Activated CD8-positive, alpha-beta T cell treated with anti-CD3 and anti-CD28 coated beads for 36 hours (primary cell): ENCODE measurements at regions of chr1 and their contacts with region 1.

Region 1: DNA sequence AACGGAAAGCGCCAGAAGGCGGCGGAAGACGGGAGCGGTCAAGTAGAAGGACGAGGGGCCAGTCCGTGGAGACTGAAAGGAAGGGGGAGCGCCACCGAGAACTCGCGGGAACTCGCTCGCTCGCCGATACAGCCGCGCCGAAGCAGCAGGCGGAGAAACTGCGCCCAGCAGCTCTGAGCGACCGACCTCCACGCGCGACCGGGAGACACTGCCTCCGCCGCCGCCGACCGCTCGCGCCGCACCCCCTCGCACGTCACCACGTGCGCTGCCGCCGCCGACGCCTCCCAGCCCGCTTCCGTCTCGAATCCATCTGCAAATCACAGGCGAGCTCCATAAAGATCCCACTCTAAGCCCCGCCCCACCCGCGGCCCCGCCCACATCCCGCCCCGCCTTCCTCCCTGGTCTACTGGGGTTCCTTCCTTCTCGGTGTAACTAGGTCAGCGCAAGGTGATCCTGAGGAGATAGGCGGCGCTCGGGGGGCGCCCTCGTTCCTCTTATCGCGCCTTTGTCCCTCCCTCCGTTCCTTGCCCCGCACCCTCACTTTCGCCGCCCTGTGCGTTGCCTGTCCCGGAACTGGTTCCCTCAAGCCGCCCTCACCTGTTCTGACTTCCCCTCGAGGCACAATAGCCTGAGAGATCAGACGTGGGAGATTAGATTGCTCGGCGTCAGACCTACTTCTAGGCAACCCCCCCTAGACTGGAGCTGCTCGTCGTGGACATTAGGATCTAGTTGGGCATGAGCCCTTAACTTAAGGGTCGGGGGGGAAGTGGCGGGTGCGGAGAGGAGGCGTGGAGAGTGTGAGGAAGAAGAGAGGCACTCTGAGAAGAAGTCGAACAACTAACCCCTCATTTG is at the start of gene IVNS1ABP:
- DNase-seq: peak; percentile 97
- ATAC-seq: peak; percentile 81
- H3K4me3 Mint-ChIP-seq: peak within 1 kb of the TSS; percentile 97
- H3K27ac Mint-ChIP-seq: peak within 1 kb of the TSS; percentile 95
- H3K4me1 Mint-ChIP-seq: peaks cover 43% of the 10 kb centered on the region
- H3K27me3 Mint-ChIP-seq: no peaks in the 10 kb centered on the region
- CTCF ChIP-seq: peak; percentile 6
- total RNA-seq, gene IVNS1ABP: 244 to 256 TPM

Region 2: GRCh38 chr1:185305419-185305818 is 11.8 kb before region 1 on chr1:
- CTCF ChIA-PET with region 1: interaction called, 3 read pairs
- POLR2A ChIA-PET with region 1: interaction called, 28 read pairs
- intact Hi-C with region 1: no loop called
- DNase-seq: no peak
- ATAC-seq: no peak
- H3K4me3 Mint-ChIP-seq: no peak overlapping the region
- H3K27ac Mint-ChIP-seq: no peak overlapping the region
- H3K4me1 Mint-ChIP-seq: peaks cover 11% of the 10 kb centered on the region
- H3K27me3 Mint-ChIP-seq: no peaks in the 10 kb centered on the region
- CTCF ChIP-seq: no peak

Region 3: DNA sequence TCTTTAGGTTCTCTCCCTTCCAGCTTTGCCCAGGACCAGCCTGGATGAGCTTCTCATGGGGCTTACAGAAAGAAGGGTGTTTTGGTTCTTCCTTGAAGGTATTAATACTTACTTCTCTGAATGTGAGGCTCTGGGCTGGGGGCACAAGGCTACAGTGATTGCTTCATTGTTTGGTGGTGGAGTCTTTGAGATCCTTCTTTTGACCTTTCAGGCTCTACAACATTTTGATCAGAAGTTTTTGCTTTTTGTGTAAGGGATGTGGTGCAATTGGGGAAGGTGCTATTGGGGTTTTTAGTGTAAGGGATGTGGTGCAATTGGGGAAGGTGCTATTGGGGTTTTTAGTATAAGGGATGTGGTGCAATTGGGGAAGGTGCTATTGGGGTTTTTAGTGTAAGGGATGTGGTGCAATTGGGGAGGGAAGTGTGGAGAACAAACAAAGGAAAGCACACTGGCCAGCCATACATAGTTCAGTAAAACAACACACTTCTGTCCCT is 103.4 kb after region 1 on chr1:
- CTCF ChIA-PET with region 1: interaction called, 6 read pairs
- POLR2A ChIA-PET with region 1: interaction called, 16 read pairs
- intact Hi-C with region 1: no loop called
- DNase-seq: peak; percentile 45
- ATAC-seq: peak; percentile 73
- H3K4me3 Mint-ChIP-seq: peak overlapping the region; percentile 27
- H3K27ac Mint-ChIP-seq: peak overlapping the region; percentile 83
- H3K4me1 Mint-ChIP-seq: peaks cover 30% of the 10 kb centered on the region
- H3K27me3 Mint-ChIP-seq: no peaks in the 10 kb centered on the region
- CTCF ChIP-seq: no peak

Region 4: GRCh38 chr1:185559684-185560331 is 242.5 kb after region 1 on chr1:
- CTCF ChIA-PET with region 1: interaction called, 18 read pairs
- POLR2A ChIA-PET with region 1: interaction called, 22 read pairs
- intact Hi-C with region 1: no loop called
- DNase-seq: peak; percentile 81
- ATAC-seq: peak; percentile 94
- H3K4me3 Mint-ChIP-seq: no peak overlapping the region
- H3K27ac Mint-ChIP-seq: peak overlapping the region; percentile 83
- H3K4me1 Mint-ChIP-seq: peaks cover 36% of the 10 kb centered on the region
- H3K27me3 Mint-ChIP-seq: no peaks in the 10 kb centered on the region
- CTCF ChIP-seq: peak; percentile 39

Region 5: DNA sequence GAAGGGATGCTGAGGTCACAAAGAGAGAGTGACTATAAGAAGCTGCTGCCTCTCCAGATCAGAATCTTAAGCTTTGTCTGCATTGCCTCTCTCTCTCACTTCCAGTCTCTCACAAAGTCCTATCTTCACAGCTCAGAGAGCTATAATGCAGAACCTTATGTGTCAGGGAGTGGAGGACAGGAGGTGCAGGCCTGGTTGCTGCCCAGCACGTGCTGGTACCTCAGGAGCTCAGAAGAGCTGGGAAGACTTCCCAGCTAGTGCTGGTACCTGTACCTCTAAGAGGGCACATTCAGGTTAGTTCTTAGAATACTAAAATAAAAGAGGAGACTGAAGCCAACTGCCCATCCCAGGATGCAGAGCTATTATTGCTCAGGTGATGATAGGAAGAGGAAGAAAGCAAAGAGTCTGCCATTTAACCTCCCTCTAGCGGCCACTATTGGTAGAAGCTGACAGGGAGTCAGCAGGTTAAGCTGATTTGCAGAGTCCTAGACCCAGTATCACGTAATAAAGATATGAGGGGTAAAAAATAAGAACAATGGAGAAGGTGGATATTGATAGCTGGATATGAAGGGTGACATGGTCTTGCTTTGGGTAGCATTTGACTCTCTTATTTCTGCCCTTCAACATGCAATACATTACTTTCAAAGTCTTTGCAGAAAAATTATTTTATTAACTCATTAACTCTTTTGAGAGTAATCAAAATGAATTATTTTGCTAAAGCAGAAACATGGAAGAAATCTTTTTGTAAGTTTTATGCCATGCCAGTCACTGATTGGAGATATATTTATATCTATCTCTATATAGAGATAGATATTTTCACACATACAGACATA is 278.8 kb after region 1 on chr1:
- CTCF ChIA-PET with region 1: interaction called, 10 read pairs
- POLR2A ChIA-PET with region 1: interaction called, 11 read pairs
- intact Hi-C with region 1: no loop called
- DNase-seq: peak; percentile 64
- ATAC-seq: peak; percentile 82
- H3K4me3 Mint-ChIP-seq: no peak overlapping the region
- H3K27ac Mint-ChIP-seq: no peak overlapping the region
- H3K4me1 Mint-ChIP-seq: peaks cover 14% of the 10 kb centered on the region
- H3K27me3 Mint-ChIP-seq: no peaks in the 10 kb centered on the region
- CTCF ChIP-seq: peak; percentile 54

Region 6: GRCh38 chr1:185681034-185681633 is 363.9 kb after region 1 on chr1:
- CTCF ChIA-PET with region 1: interaction called, 11 read pairs
- POLR2A ChIA-PET with region 1: interaction called, 4 read pairs
- intact Hi-C with region 1: no loop called
- DNase-seq: peak; percentile 22
- ATAC-seq: peak; percentile 71
- H3K4me3 Mint-ChIP-seq: no peak overlapping the region
- H3K27ac Mint-ChIP-seq: no peak overlapping the region
- H3K4me1 Mint-ChIP-seq: peaks cover 21% of the 10 kb centered on the region
- H3K27me3 Mint-ChIP-seq: no peaks in the 10 kb centered on the region
- CTCF ChIP-seq: peak; percentile 68